OCI-LY7 (cell line): ENCODE measurements at regions of chr18 and their contacts with region 1.

Region 1: DNA sequence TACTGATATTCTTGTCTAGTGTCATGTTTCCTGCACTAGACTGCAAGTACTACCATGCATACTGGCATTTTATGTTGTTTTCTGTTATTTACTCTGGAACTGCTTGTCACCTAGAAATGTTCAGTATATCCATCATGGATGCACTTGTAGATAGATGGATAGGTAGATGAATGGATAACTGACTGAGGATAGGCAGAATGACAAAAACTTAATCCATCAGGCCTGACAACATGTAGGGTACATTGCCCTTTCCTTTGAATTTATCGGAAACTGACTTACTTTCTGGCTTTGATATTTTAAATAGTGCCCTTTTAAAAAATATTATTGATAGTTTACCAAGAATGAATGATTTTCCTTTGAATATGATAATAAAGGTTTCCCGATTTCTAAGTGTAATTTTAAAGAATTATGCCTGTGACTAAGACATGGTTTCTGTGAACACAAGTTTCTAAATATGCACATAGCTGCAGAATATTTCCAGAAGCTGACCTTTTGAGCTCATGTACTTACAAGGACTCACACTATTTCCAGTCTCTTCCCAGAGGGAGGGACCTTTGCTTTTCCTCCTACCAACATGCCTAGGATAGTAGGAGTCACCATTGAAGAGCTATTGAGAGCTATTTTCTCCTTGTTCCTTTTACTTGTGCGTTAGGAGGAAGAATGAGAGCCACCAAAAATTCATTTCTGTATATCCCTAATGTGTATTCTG is 81.3 kb downstream of the ANKRD12 start:
- DNase-seq: no peak
- H3K4me3 ChIP-seq: no peak overlapping the region
- H3K27ac ChIP-seq: no peak overlapping the region
- H3K4me1 ChIP-seq: no peaks in the 10 kb centered on the region
- CTCF ChIP-seq: no peak

Region 2: DNA sequence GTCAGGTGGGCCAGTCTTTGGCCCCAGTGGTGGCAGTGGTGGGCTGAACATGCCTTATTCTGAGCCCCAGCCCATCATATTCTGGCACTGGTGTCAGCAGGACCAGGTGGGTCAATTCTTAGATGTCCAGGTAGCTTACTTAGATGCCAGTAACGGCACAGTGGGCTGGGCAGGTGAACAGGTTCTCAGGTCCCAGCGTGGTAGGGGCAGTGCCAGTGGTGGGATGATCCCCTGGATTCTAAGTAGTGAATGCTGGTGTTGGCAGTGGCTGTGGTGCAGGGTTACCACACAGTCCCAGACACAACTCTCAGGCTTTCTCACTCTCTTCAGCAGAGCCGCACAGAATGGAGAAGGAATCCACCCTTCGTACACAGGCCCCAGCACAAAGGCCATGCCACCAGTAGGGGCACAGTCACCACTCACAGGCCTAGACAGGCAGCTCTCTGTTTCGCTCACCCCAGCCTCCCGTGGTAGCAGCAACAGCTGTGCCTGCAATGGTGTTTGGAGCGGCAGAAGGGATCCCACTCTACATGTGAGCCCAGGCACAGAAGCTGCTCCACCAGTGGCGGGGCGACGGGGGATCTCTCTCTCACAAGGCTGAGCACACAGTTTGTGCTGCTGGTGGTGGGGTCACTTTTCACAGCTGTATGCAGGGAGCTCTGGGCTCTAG is 16.0 kb after region 1 on chr18:
- CTCF ChIA-PET with region 1: no interaction called
- POLR2A ChIA-PET with region 1: interaction called, 14 read pairs
- intact Hi-C with region 1: no loop called
- DNase-seq: no peak
- H3K4me3 ChIP-seq: no peak overlapping the region
- H3K27ac ChIP-seq: no peak overlapping the region
- H3K4me1 ChIP-seq: no peaks in the 10 kb centered on the region
- CTCF ChIP-seq: no peak